H1 (cell line): ENCODE measurements at regions of chr16 and their contacts with region 1.

Region 1: DNA sequence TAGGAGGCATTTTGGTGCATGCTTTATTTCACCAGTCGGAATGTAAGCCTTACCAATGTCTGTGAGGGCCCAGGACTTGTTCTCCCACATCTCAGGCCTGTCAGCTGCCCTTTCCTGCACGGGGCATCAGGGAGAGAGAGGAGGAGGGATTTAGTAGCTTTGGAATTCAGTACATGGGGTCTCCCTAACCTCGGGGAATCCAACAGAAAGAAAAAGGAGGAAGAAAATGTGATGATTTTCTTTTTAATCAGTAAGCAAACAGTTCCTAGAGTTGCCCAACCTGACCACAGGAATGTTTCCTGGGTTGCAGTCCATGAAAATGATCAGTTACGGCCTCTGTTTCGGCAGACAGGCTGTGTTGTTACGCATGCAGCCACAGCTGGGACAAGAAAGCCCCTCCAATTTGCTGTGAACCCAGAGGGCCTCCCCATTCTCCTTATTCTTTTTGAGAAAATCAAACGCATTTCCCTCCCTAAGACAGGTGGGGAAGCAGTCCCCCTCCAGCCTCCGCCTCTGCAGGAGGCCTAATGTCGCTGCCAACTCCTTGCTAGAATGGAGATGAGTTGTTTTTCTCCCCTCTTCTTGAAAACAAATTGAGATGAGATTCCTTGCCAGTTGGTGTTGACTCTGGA is 53.1 kb upstream of the TANGO6 start:
- DNase-seq: no peak
- H3K4me3 ChIP-seq: peak overlapping the region in 2 of 4 experiments; percentile 13 to 15; a peak in 2 of 8 replicates
- H3K27ac ChIP-seq: peak overlapping the region; percentile 80
- H3K4me1 ChIP-seq: peaks cover 8 to 35% (median 24%) of the 10 kb centered on the region in 4 experiments
- H3K27me3 ChIP-seq: no peaks in the 10 kb centered on the region
- CTCF ChIP-seq: no peak
- EP300 ChIP-seq: no peak
- POLR2A ChIP-seq: no peak
- RAD21 ChIP-seq: no peak

Region 2: GRCh38 chr16:68704232-68704867 is 85.9 kb before region 1 on chr16:
- CTCF ChIA-PET with region 1: interaction called, 71 read pairs
- POLR2A ChIA-PET with region 1: interaction called, 4 read pairs
- DNase-seq: peak; percentile 84 to 92
- H3K4me3 ChIP-seq: no peak overlapping the region
- H3K27ac ChIP-seq: no peak overlapping the region
- H3K4me1 ChIP-seq: peaks cover 0 to 10% (median 3%) of the 10 kb centered on the region in 4 experiments; a peak in 4 of 7 replicates
- H3K27me3 ChIP-seq: no peaks in the 10 kb centered on the region
- CTCF ChIP-seq: peak; percentile 87 to 96 (median 96)
- EP300 ChIP-seq: peak in 1 of 2 experiments; percentile 20; a peak in 2 of 3 replicates
- POLR2A ChIP-seq: no peak
- RAD21 ChIP-seq: peak; percentile 98

Region 3: GRCh38 chr16:68737046-68737729 is 53.1 kb before region 1 on chr16 and contains the start of gene CDH1:
- CTCF ChIA-PET with region 1: no interaction called
- POLR2A ChIA-PET with region 1: interaction called, 23 read pairs
- DNase-seq: peak; percentile 86 to 97
- H3K4me3 ChIP-seq: peak within 1 kb of the TSS; percentile 60 to 90 (median 84)
- H3K27ac ChIP-seq: peak within 1 kb of the TSS; percentile 50
- H3K4me1 ChIP-seq: peaks cover 0 to 7% (median 2%) of the 10 kb centered on the region in 4 experiments; a peak in 3 of 7 replicates
- H3K27me3 ChIP-seq: no peaks in the 10 kb centered on the region
- CTCF ChIP-seq: no peak
- EP300 ChIP-seq: no peak
- POLR2A ChIP-seq: peak; percentile 98 to 99
- RAD21 ChIP-seq: 0 out of 4 replicates have a peak, but pooled peaks of 1 of the 2 experiments have one; percentile 2
- total RNA-seq, gene CDH1: 265 and 319 TPM in 2 replicates

Region 4: DNA sequence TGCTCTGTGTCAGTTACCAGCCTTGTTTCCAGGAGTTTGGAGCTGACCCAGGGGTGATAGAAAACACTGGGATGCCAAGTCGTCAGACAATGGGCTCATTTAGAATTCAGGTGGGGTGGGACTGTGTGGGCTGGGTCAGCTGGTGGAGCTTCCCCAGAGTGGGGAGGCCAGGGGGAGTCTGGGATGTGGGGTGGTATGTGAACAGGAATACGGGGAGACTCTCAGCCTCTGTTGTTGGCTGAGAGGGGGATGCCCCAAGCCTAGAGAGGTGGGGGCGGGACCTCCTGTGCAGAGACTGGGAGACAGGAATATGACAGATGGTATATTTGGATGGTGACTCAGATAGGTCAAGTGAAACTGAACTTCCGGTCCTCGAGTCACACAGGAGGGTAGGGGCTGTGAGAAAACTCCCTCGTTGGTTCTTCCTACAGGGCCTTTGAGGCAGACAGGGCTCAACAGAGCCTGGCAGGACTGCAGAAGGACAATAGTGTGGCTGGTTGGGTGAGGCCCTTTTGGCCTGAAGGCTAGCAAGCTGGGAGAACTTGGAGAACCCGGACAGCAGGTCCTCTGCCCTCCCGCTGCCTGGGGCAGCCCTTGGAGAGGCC is 29.5 kb before region 1 on chr16:
- CTCF ChIA-PET with region 1: interaction called, 3 read pairs
- POLR2A ChIA-PET with region 1: interaction called, 11 read pairs
- DNase-seq: no peak
- H3K4me3 ChIP-seq: no peak overlapping the region
- H3K27ac ChIP-seq: no peak overlapping the region
- H3K4me1 ChIP-seq: peaks cover 17 to 39% (median 36%) of the 10 kb centered on the region in 4 experiments
- H3K27me3 ChIP-seq: no peaks in the 10 kb centered on the region
- CTCF ChIP-seq: no peak
- EP300 ChIP-seq: no peak
- POLR2A ChIP-seq: no peak
- RAD21 ChIP-seq: no peak

Region 5: DNA sequence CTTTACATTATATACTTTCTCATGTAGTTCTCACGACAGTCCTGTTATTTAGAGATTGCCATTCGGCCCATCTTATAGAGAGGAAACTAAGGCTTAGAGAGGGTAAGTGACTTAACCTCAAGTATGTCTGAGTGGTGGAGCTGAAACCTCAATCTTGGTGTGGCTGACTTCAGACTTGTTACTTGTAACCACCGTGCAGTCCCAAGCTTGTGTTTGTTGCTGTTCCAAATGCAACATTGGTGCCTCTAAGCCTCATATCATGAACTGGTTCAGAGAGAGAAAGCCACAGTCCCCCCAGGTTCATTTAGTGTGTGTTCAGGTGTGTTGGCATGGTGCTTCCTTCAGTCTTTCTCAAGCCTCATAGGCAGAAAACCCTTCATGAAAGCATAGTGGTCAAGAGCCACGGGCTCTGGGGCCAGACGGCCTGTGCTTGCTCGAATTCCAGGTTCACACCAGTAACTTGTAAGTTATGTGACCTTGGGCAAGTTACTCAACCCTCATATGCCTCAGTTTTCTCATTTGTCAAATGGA is 13.4 kb before region 1 on chr16:
- CTCF ChIA-PET with region 1: interaction called, 6 read pairs
- POLR2A ChIA-PET with region 1: interaction called, 30 read pairs
- DNase-seq: no peak
- H3K4me3 ChIP-seq: no peak overlapping the region
- H3K27ac ChIP-seq: no peak overlapping the region
- H3K4me1 ChIP-seq: peaks cover 7 to 26% (median 24%) of the 10 kb centered on the region in 4 experiments
- H3K27me3 ChIP-seq: no peaks in the 10 kb centered on the region
- CTCF ChIP-seq: no peak
- EP300 ChIP-seq: no peak
- POLR2A ChIP-seq: no peak
- RAD21 ChIP-seq: no peak

Region 6: GRCh38 chr16:68814516-68814915 is 24.3 kb after region 1 on chr16:
- CTCF ChIA-PET with region 1: no interaction called
- POLR2A ChIA-PET with region 1: no interaction called
- DNase-seq: no peak
- H3K4me3 ChIP-seq: no peak overlapping the region
- H3K27ac ChIP-seq: no peak overlapping the region
- H3K4me1 ChIP-seq: no peaks in the 10 kb centered on the region
- H3K27me3 ChIP-seq: no peaks in the 10 kb centered on the region
- CTCF ChIP-seq: no peak
- EP300 ChIP-seq: no peak
- POLR2A ChIP-seq: no peak
- RAD21 ChIP-seq: no peak

Region 7: GRCh38 chr16:68834550-68834949 is 44.3 kb after region 1 on chr16:
- CTCF ChIA-PET with region 1: no interaction called
- POLR2A ChIA-PET with region 1: no interaction called
- DNase-seq: no peak
- H3K4me3 ChIP-seq: no peak overlapping the region
- H3K27ac ChIP-seq: no peak overlapping the region
- H3K4me1 ChIP-seq: no peaks in the 10 kb centered on the region
- H3K27me3 ChIP-seq: no peaks in the 10 kb centered on the region
- CTCF ChIP-seq: no peak
- EP300 ChIP-seq: no peak
- POLR2A ChIP-seq: no peak
- RAD21 ChIP-seq: no peak